Activated CD8-positive, alpha-beta T cell treated with anti-CD3 and anti-CD28 coated beads for 36 hours (primary cell): ENCODE measurements at regions of chr1 and their contacts with region 1.

Region 1: DNA sequence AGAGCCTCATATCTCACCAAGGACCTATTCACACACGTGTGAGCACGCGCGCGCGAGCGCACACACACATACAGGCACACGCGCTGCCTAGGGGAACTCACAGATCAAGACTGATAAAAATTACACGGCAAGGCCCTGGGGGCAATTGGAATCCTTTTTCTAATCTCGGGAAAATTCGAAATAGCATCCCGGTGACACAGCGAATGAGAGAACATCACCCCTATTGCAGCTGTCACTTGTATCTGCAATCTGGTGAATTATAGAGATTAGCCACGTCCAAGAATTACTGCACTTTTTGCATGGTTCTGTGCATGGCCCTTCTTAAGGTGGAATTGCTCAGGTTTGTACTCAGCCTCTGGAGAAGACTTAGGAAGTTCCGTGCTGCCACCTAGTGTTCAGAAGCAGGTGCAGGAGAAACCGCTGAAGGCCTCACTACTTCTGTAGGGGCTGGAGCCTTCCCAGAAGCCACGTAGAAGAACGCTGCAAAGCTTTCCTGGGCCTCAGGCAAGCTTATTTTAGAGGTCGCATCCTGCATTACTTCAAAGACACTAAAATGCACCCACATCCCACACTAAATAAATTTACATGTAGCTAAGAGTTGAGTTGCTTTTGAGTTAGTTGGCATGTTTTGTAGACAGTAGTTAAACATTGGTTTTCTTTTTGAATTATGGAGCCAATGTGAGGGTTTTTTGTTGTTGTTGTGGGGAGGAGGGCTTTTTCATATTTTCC is 229.2 kb upstream of the CAMK1G start:
- DNase-seq: peak; percentile 75
- ATAC-seq: peak; percentile 71
- H3K4me3 Mint-ChIP-seq: no peak overlapping the region
- H3K27ac Mint-ChIP-seq: no peak overlapping the region
- H3K4me1 Mint-ChIP-seq: no peaks in the 10 kb centered on the region
- H3K27me3 Mint-ChIP-seq: peaks cover 1% of the 10 kb centered on the region
- CTCF ChIP-seq: peak; percentile 80

Region 2: DNA sequence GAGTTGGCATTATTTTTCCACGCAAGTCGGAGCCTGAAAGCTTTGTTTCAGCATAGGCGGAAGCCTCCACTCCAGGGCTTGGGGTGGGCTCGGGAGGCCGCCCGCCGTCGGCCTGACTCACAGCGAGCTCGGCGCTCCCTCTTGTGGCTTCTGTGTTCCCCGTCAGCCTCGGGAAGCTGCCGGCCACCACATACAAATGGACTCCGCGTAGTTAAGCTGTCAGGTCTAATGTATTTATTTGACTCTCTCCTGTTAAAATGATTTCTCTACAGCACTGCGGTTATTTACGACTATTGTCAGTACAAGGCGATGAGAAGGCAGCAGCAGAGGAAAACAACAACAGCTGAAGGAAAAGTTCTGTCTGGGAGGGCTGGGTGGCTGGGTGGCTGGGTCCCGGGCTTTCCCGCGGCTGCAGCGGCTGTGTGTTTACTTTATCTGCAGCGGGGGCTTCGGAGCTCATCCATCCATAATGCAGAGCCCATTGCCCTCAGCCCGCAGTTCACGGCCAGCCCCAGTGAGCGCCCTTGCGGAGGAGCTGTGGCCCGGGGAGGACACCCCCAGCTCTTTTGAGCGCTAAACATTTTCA is 146.5 kb before region 1 on chr1:
- CTCF ChIA-PET with region 1: no interaction called
- POLR2A ChIA-PET with region 1: no interaction called
- intact Hi-C with region 1: loop called (anchors 10 kb)
- DNase-seq: peak; percentile 58
- ATAC-seq: peak; percentile 60
- H3K4me3 Mint-ChIP-seq: no peak overlapping the region
- H3K27ac Mint-ChIP-seq: no peak overlapping the region
- H3K4me1 Mint-ChIP-seq: peaks cover 2% of the 10 kb centered on the region
- H3K27me3 Mint-ChIP-seq: peaks cover 36% of the 10 kb centered on the region
- CTCF ChIP-seq: peak; percentile 55

Region 3: GRCh38 chr1:209335178-209335577 is 19.1 kb before region 1 on chr1:
- CTCF ChIA-PET with region 1: interaction called, 10 read pairs
- POLR2A ChIA-PET with region 1: no interaction called
- intact Hi-C with region 1: no loop called
- DNase-seq: peak; percentile 17
- ATAC-seq: peak; percentile 42
- H3K4me3 Mint-ChIP-seq: no peak overlapping the region
- H3K27ac Mint-ChIP-seq: no peak overlapping the region
- H3K4me1 Mint-ChIP-seq: no peaks in the 10 kb centered on the region
- H3K27me3 Mint-ChIP-seq: peaks cover 14% of the 10 kb centered on the region
- CTCF ChIP-seq: peak; percentile 70

Region 4: GRCh38 chr1:209493559-209493958 is 139.3 kb after region 1 on chr1:
- CTCF ChIA-PET with region 1: no interaction called
- POLR2A ChIA-PET with region 1: no interaction called
- intact Hi-C with region 1: no loop called
- DNase-seq: no peak
- ATAC-seq: no peak
- H3K4me3 Mint-ChIP-seq: no peak overlapping the region
- H3K27ac Mint-ChIP-seq: no peak overlapping the region
- H3K4me1 Mint-ChIP-seq: no peaks in the 10 kb centered on the region
- H3K27me3 Mint-ChIP-seq: peaks cover 2% of the 10 kb centered on the region
- CTCF ChIP-seq: no peak